ENCODE measurements at regions of chr15 and their contacts with region 1.

Region 1: DNA sequence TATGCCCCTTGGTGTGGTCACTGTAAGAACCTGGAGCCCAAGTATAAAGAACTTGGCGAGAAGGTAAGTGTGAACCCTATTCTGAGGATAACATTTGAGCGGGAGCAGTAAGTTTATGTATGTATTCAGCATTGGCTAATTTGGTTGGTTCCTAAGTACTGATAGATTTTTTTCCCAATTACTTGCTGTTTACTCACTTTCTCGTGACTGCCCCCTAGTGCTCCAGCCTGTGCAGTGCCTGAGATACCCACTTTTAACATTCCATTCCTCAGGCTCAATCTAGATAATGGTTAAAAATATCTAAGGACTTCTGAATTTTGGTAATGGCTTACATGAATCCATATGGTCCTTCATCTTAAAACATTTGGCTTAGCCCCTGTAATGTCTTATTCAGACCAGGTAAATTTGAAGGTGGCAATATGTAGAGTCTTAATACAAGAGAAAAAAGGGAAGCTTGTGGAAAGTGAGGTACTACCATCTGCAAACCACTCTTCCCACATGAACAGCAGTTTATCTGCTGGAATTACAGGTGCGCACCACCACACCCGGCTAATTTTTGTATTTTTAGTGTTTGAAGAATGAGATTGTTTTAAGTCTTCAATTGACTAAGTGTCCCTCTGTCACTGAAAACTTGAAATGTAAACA is 7.1 kb downstream of the ELL3 start:
- DNase-seq: no peak
- ATAC-seq: peak; percentile 81
- H3K4me3 ChIP-seq: no peak overlapping the region
- H3K27ac ChIP-seq: no peak overlapping the region
- H3K4me1 ChIP-seq: no peaks in the 10 kb centered on the region
- H3K27me3 ChIP-seq: no peaks in the 10 kb centered on the region
- CTCF ChIP-seq: peak; percentile 83 to 92 (median 84)
- EP300 ChIP-seq: no peak
- POLR2A ChIP-seq: no peak
- RAD21 ChIP-seq: peak; percentile 60

Region 2: GRCh38 chr15:43808960-43809678 is 39.4 kb after region 1 on chr15:
- CTCF ChIA-PET with region 1: interaction called, 3 read pairs
- POLR2A ChIA-PET with region 1: interaction called, 5 read pairs
- RAD21 ChIA-PET with region 1: interaction called, 23 read pairs
- SMC1A ChIA-PET with region 1: interaction called, 17 read pairs
- in situ Hi-C with region 1: no loop called
- intact Hi-C with region 1: no loop called
- DNase-seq: no peak
- ATAC-seq: peak; percentile 94
- H3K4me3 ChIP-seq: peak overlapping the region; percentile 19; the same call in 1 of the 2 replicates
- H3K27ac ChIP-seq: peak overlapping the region; percentile 59
- H3K4me1 ChIP-seq: peaks cover 26% of the 10 kb centered on the region
- H3K27me3 ChIP-seq: no peaks in the 10 kb centered on the region
- CTCF ChIP-seq: no peak
- EP300 ChIP-seq: peak; percentile 85 to 94; a peak in 3 of 4 replicates
- POLR2A ChIP-seq: no peak
- RAD21 ChIP-seq: no peak